K562 (cell line): ENCODE measurements at regions of chr6 and their contacts with region 1.

Region 1: GRCh38 chr6:147202516-147203312 is 1.5 kb upstream of the STXBP5 start:
- DNase-seq: peak; percentile 93 to 99 (median 96)
- ATAC-seq: peak; percentile 78
- H3K4me3 ChIP-seq: peak overlapping the region; percentile 88
- H3K27ac ChIP-seq: peak overlapping the region; percentile 88
- H3K4me1 ChIP-seq: peaks cover 5 to 14% of the 10 kb centered on the region in 2 experiments
- H3K27me3 ChIP-seq: no peaks in the 10 kb centered on the region
- CTCF ChIP-seq: no peak
- EP300 ChIP-seq: no peak; the same call in 1 of the 2 replicates
- POLR2A ChIP-seq: peak; percentile 99
- RAD21 ChIP-seq: no peak; a peak in 2 of 4 replicates

Region 2: GRCh38 chr6:146670161-146670560 is 532.6 kb before region 1 on chr6:
- CTCF ChIA-PET with region 1: no interaction called
- POLR2A ChIA-PET with region 1: no interaction called
- in situ Hi-C with region 1: no loop called
- intact Hi-C with region 1: no loop called
- DNase-seq: no peak
- ATAC-seq: no peak
- H3K4me3 ChIP-seq: no peak overlapping the region
- H3K27ac ChIP-seq: no peak overlapping the region
- H3K4me1 ChIP-seq: no peaks in the 10 kb centered on the region
- H3K27me3 ChIP-seq: no peaks in the 10 kb centered on the region
- CTCF ChIP-seq: no peak
- EP300 ChIP-seq: no peak
- POLR2A ChIP-seq: no peak
- RAD21 ChIP-seq: no peak

Region 3: GRCh38 chr6:146876271-146877151 is 326.2 kb before region 1 on chr6:
- CTCF ChIA-PET with region 1: no interaction called
- POLR2A ChIA-PET with region 1: interaction called, 4 read pairs
- in situ Hi-C with region 1: loop called (anchors 25 kb)
- intact Hi-C with region 1: loop called (anchors 2 kb)
- DNase-seq: peak; percentile 79 to 98 (median 84)
- ATAC-seq: peak; percentile 88
- H3K4me3 ChIP-seq: no peak overlapping the region
- H3K27ac ChIP-seq: peak overlapping the region; percentile 96
- H3K4me1 ChIP-seq: peaks cover 36 to 68% of the 10 kb centered on the region in 2 experiments
- H3K27me3 ChIP-seq: no peaks in the 10 kb centered on the region
- CTCF ChIP-seq: 0 out of 6 replicates have a peak, but pooled peaks of 1 of the 3 experiments have one; percentile 1
- EP300 ChIP-seq: peak; percentile 100
- POLR2A ChIP-seq: no peak
- RAD21 ChIP-seq: peak; percentile 7 to 38; a peak in 3 of 4 replicates

Region 4: GRCh38 chr6:146892613-146893401 is 309.9 kb before region 1 on chr6:
- CTCF ChIA-PET with region 1: no interaction called
- POLR2A ChIA-PET with region 1: interaction called, 9 read pairs
- in situ Hi-C with region 1: loop called (anchors 25 kb)
- intact Hi-C with region 1: no loop called
- DNase-seq: peak in 3 of 4 experiments; percentile 42 to 90 (median 83)
- ATAC-seq: peak; percentile 62
- H3K4me3 ChIP-seq: peak overlapping the region; percentile 36
- H3K27ac ChIP-seq: peak overlapping the region; percentile 65
- H3K4me1 ChIP-seq: peaks cover 39 to 96% of the 10 kb centered on the region in 2 experiments
- H3K27me3 ChIP-seq: no peaks in the 10 kb centered on the region
- CTCF ChIP-seq: no peak
- EP300 ChIP-seq: peak; percentile 88
- POLR2A ChIP-seq: peak; percentile 73
- RAD21 ChIP-seq: peak; percentile 3 to 36; a peak in 3 of 4 replicates

Region 5: DNA sequence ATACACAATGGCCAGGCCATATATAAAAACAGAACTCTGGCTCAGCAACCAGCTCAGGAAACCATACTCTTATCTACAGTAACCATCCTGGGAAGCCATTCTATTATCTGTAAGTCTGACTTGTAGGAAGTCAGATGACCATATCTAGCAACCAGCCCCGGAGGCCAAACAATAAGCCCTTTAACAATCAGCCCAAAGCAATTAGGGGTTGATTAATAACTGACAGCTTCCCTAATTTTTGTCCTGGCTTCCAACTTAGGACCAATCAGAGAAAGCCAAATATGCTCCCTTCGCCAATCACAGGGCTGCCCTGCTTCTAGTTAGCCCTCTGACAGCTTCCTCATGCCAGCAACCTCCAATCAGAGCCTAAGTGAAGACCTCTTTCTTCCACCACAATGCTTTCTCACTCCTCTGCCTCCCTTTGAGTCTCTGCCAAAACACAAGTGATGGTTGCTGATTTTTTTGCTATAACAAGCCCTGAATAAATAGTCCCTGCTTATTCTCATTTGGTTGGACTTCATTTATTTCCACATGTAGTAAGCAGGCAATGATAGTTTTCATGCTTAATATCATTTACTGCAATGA is 36.3 kb before region 1 on chr6:
- CTCF ChIA-PET with region 1: no interaction called
- POLR2A ChIA-PET with region 1: interaction called, 7 read pairs
- in situ Hi-C with region 1: no loop called
- intact Hi-C with region 1: loop called (anchors 1 kb)
- DNase-seq: peak; percentile 68 to 92 (median 78)
- ATAC-seq: peak; percentile 84
- H3K4me3 ChIP-seq: no peak overlapping the region
- H3K27ac ChIP-seq: peak overlapping the region; percentile 79
- H3K4me1 ChIP-seq: peaks cover 6 to 29% of the 10 kb centered on the region in 2 experiments
- H3K27me3 ChIP-seq: no peaks in the 10 kb centered on the region
- CTCF ChIP-seq: no peak
- EP300 ChIP-seq: peak; percentile 94
- POLR2A ChIP-seq: no peak
- RAD21 ChIP-seq: peak; percentile 29 to 36; a peak in 2 of 4 replicates

Region 6: DNA sequence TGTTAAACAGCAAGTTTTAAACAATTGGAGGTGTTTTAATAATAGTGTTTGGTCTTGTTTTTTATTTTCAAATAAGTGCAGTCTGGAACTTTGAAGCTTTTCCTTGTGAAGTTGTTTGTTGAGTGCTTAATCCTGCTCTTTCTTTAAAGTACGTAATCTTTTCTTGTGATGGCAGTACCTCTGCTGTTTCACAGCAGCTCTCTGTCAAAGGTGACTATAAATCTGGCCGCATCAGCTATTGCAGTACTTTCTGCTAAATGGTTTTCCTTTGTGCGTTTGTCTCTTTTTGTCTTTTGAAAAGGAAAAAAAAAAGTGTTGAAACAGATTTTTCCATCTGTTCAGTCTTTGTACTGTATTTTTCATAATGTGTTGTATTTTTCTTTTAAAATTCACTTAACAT is 14.2 kb after region 1 on chr6:
- CTCF ChIA-PET with region 1: no interaction called
- POLR2A ChIA-PET with region 1: interaction called, 18 read pairs
- in situ Hi-C with region 1: no loop called
- intact Hi-C with region 1: no loop called
- DNase-seq: no peak
- ATAC-seq: peak; percentile 13
- H3K4me3 ChIP-seq: no peak overlapping the region
- H3K27ac ChIP-seq: peak overlapping the region; percentile 15; the same call in 1 of the 3 replicates
- H3K4me1 ChIP-seq: peaks cover 4 to 43% of the 10 kb centered on the region in 2 experiments; a peak in 4 of 5 replicates
- H3K27me3 ChIP-seq: no peaks in the 10 kb centered on the region
- CTCF ChIP-seq: no peak
- EP300 ChIP-seq: no peak
- POLR2A ChIP-seq: no peak
- RAD21 ChIP-seq: no peak

Region 7: GRCh38 chr6:147508866-147509608 is 306.3 kb after region 1 on chr6:
- CTCF ChIA-PET with region 1: no interaction called
- POLR2A ChIA-PET with region 1: no interaction called
- in situ Hi-C with region 1: no loop called
- intact Hi-C with region 1: no loop called
- DNase-seq: peak in 3 of 4 experiments; percentile 41 to 54 (median 52)
- ATAC-seq: 0 out of 3 replicates have a peak, but pooled peaks have one; percentile 15
- H3K4me3 ChIP-seq: peak overlapping the region; percentile 34
- H3K27ac ChIP-seq: no peak overlapping the region
- H3K4me1 ChIP-seq: peaks cover 18 to 29% of the 10 kb centered on the region in 2 experiments; a peak in 4 of 5 replicates
- H3K27me3 ChIP-seq: peaks cover 11 to 50% of the 10 kb centered on the region in 2 experiments
- CTCF ChIP-seq: peak in 1 of 3 experiments; percentile 10; a peak in 1 of 6 replicates
- EP300 ChIP-seq: no peak
- POLR2A ChIP-seq: no peak
- RAD21 ChIP-seq: peak in 1 of 2 experiments; percentile 36; a peak in 2 of 4 replicates